ENCODE measurements at regions of chr6 and their contacts with region 1.

Region 1: DNA sequence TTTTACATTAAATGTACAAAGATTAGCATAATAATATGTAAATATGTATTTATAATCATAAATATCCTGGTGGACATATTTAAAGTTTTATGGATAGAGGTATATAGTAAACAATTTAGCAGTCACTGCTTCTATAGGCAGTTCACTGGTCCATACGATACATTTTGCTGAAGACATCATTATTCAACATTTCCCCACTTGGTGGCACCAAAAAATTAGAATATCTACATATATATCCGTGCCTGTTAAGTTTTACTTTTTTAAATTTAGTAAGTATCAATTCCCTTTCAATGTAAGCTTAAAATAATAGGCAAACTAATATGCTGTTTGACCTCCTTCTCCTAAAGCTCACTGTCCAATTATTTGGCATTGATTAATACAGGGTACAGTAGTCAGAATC is 64.2 kb downstream of the LMBRD1 start:
- DNase-seq: no peak
- H3K4me3 Mint-ChIP-seq: no peak overlapping the region
- H3K27ac Mint-ChIP-seq: no peak overlapping the region
- H3K4me1 Mint-ChIP-seq: no peaks in the 10 kb centered on the region
- H3K27me3 Mint-ChIP-seq: no peaks in the 10 kb centered on the region

Region 2: DNA sequence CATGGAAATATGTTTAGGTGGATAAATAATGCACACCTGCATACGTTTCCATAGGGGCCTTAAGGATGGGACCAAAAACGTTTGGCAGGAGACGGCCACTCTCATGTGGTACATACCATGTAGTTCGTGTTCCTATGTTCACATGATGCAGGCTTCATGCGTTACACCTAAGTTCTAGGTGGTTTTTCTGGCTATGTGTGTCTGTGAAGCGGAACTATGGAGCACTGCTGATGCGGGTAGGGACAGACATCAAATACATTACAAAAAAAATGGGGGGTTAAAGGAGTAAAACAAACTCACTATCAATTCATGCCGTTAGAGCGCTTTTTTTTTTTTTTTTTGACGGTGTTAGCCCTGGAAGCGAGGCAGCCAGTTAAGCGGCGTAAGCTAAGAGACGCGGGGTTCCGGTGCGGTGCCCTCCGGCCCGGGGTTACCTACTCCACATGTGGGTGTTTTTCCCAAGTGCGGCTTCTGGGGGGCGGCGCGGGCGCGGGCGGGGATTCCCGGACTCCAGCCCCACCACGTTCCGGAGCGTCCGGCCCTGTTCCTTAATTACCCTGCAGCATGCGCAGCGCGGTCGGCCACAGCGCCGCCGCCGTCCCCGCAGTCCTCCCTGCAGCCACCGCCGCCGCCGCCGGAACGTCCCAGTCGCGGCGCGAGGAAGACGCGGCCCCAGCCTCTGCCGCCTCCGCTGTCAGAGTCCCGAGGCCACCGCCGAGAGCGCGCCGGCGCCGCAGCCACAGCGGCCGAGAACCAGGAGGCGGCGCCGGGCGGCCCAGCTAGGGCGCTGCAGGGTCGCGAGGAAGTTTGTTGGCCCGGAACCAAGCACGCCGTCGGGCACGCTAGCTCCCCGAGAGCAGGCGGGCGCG is 134.4 kb after region 1 on chr6:
- intact Hi-C with region 1: loop called (anchors 10 kb)
- DNase-seq: peak; percentile 49
- H3K4me3 Mint-ChIP-seq: peak overlapping the region; percentile 76
- H3K27ac Mint-ChIP-seq: no peak overlapping the region
- H3K4me1 Mint-ChIP-seq: peaks cover 18% of the 10 kb centered on the region
- H3K27me3 Mint-ChIP-seq: peaks cover 53% of the 10 kb centered on the region

Region 3: GRCh38 chr6:69914015-69914485 is 181.4 kb after region 1 on chr6:
- intact Hi-C with region 1: no loop called
- DNase-seq: no peak
- H3K4me3 Mint-ChIP-seq: no peak overlapping the region
- H3K27ac Mint-ChIP-seq: no peak overlapping the region
- H3K4me1 Mint-ChIP-seq: peaks cover 7% of the 10 kb centered on the region
- H3K27me3 Mint-ChIP-seq: no peaks in the 10 kb centered on the region

Measured in activated T-helper 2 cell treated with anti-CD3 and anti-CD28 coated beads, Interferon-gamma antibody, Interleukin-2, Interleukin-4, amounts not matched to agents 10 μg/mL and 5 μg/mL and 100 μg/mL, durations not matched to agents 14 hours and 24 hours and 36 hours (primary cell).